Endothelial cell of umbilical vein (primary cell): ENCODE measurements at regions of chr4 and their contacts with region 1.

Region 1: DNA sequence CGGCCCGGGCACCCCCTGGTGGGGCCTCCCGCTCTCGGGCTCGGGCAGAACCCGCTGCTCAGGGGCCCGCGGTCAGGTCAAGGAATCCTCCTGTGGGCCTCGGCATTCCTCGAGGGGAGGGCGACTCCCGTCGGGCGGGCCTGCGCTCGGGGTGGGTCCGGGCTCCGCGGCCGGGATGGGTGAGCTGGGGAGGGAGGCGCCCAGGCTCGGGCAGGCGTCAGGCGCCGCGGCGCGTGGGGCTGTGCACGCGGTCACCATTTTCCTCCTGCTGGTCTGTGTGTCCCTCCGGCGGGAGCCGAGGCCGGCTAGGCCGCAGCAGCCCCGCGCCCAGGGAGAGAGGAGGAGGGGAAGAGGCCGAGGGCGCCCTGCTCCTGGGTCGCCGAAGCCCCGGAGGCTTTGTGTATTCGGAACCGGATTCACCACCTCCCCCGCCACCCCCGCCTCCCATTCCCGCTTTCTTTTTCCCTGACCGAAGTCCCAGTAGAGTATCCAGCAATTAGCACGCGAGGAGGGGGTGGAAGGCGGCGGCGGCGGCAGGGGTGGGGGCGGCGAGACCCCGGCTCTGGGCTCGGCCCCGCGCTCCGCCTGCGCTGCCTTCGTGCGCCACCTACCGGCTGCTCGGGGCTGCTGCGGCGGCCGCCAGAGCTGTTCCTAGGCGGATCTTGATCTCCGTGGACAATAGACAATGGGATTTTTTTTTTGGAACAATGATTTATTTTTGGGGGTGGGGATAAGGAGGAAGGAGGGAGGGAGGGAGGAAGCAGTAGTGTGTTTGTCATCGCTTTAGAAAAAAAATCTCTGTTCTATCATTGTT is 99.0 kb upstream of the MAML3 start:
- DNase-seq: peak; percentile 93
- H3K4me3 ChIP-seq: peak overlapping the region in 1 of 3 experiments; percentile 37
- H3K27ac ChIP-seq: peak overlapping the region; percentile 78
- H3K4me1 ChIP-seq: peaks cover 60% of the 10 kb centered on the region
- H3K27me3 ChIP-seq: no peaks in the 10 kb centered on the region
- CTCF ChIP-seq: peak; percentile 83 to 91
- POLR2A ChIP-seq: no peak

Region 2: DNA sequence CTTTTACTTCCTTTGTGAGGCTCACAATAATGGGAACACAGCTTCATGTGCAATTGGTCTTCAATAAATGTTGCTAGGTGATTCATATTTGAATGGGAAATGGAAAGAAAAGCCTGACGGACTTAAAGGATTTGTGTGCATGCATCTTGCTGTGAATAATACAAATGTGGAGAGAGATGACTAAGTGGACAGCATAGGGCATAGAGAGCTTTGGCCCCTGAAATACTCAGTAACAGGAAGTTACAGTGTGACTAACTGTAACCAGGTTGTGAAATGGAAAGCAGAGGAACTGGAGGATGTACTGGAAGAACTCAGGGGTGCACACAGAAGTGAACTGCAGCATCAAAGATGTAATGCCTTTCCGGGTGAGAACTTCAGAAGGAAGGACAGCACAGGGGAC is 380.7 kb before region 1 on chr4:
- CTCF ChIA-PET with region 1: no interaction called
- POLR2A ChIA-PET with region 1: no interaction called
- dilution Hi-C with region 1: no loop called
- intact Hi-C with region 1: loop called (anchors 5 kb)
- DNase-seq: peak; percentile 93
- H3K4me3 ChIP-seq: no peak overlapping the region
- H3K27ac ChIP-seq: peak overlapping the region; percentile 56
- H3K4me1 ChIP-seq: peaks cover 16% of the 10 kb centered on the region
- H3K27me3 ChIP-seq: no peaks in the 10 kb centered on the region
- CTCF ChIP-seq: no peak
- POLR2A ChIP-seq: no peak

Region 3: DNA sequence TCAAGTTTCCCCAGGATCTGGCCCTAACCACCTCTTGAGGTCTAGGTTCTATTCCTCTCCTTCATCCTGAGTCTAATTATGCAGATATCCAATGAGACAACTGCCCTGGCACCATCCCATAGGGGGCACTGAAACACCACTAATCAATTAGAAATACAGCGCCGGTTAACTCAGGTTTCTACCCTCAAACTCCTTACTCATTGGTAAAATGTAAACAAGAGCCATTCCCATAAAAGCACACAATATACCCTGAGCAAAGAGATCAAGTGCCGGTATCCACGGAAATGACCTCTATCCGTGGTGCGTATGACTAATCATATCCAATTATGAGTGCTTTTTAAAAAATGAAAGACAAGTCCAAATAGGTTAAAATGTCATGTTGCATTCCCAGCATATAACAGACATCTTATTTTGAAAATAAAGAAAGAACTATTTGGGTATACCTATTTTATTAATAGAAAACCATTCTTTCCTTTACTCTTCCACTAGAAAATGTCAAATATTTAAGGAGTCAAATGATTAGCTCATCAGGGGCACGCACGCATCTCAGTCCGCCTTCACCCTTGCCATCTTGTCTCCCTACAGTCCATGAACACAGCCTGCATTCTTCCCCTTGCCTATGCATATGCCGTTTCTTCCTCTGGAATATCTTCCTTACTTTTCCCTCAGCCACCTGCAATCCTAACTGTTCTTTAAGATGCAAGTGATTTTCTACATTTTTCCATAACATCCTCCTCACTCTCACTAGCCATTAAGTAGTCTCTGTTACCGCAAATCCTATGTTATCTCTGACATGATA is 240.1 kb before region 1 on chr4:
- CTCF ChIA-PET with region 1: interaction called, 46 read pairs
- POLR2A ChIA-PET with region 1: interaction called, 5 read pairs
- dilution Hi-C with region 1: no loop called
- intact Hi-C with region 1: loop called (anchors 1 kb)
- DNase-seq: peak; percentile 92
- H3K4me3 ChIP-seq: no peak overlapping the region
- H3K27ac ChIP-seq: peak overlapping the region; percentile 49
- H3K4me1 ChIP-seq: peaks cover 17% of the 10 kb centered on the region
- H3K27me3 ChIP-seq: no peaks in the 10 kb centered on the region
- CTCF ChIP-seq: peak; percentile 62 to 74
- POLR2A ChIP-seq: no peak

Region 4: GRCh38 chr4:140163029-140163810 is 89.7 kb before region 1 on chr4:
- CTCF ChIA-PET with region 1: interaction called, 24 read pairs
- POLR2A ChIA-PET with region 1: interaction called, 5 read pairs
- dilution Hi-C with region 1: no loop called
- intact Hi-C with region 1: no loop called
- DNase-seq: peak; percentile 91
- H3K4me3 ChIP-seq: peak overlapping the region in 1 of 3 experiments; percentile 20
- H3K27ac ChIP-seq: peak overlapping the region; percentile 66
- H3K4me1 ChIP-seq: peaks cover 13% of the 10 kb centered on the region
- H3K27me3 ChIP-seq: no peaks in the 10 kb centered on the region
- CTCF ChIP-seq: no peak
- POLR2A ChIP-seq: peak; percentile 22

Region 5: DNA sequence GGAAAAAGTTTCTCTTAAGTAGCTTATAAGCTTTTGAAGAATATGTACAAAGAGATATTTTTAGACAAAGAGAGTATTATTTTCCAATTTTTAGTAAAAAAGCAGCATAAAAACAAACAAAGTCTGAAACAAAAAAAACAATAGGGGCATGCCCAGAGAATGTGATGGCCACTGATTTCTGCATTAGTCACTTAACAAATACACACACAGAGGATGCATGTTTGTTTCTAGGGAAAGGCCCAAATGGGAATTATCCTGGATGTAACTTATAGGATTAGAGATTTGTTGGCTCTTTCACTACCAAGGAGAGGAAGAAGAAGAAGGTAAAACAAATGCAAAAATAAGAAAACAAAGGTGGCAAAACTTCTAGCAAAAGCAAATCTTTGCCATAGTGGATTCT is 24.6 kb after region 1 on chr4:
- CTCF ChIA-PET with region 1: interaction called, 8 read pairs
- POLR2A ChIA-PET with region 1: no interaction called
- dilution Hi-C with region 1: no loop called
- intact Hi-C with region 1: loop called (anchors 2 kb)
- DNase-seq: peak; percentile 77
- H3K4me3 ChIP-seq: no peak overlapping the region
- H3K27ac ChIP-seq: peak overlapping the region; percentile 75
- H3K4me1 ChIP-seq: peaks cover 13% of the 10 kb centered on the region
- H3K27me3 ChIP-seq: peaks cover 0 to 1% of the 10 kb centered on the region in 2 experiments
- CTCF ChIP-seq: no peak
- POLR2A ChIP-seq: no peak

Region 6: DNA sequence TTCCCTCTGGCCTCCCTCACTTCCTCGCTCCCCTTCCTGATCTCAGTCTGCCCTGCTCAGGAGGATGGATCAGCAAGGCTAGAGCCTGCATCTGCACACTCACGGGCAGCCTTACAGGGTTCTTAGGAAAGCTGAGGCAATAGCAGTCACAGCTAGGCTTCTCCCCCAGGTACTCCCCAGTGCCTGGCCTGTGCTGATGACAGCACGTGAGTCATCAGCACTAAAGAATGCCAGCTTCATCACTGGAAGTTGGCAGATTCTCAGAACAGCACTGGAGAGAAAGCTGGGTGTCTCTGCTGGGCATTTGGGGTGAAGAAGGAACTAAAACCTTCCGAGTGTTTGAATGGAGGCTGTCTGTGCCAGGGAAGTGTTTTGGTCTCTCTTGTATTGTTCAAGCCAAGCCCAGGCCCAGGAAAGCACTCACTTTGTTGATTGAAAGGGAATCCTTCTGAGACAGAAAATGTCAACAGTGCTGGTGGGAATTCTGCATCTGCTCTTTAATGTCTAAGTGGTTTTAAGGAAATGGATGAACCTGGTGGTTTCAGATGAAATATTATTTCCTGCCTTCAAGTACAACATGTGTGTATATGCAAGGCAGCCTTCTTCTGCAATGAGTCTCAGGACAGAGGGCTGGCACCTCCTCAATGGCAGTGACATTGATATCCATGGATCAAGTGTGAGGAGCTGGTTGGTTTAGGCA is 47.5 kb after region 1 on chr4:
- CTCF ChIA-PET with region 1: no interaction called
- POLR2A ChIA-PET with region 1: no interaction called
- dilution Hi-C with region 1: no loop called
- intact Hi-C with region 1: no loop called
- DNase-seq: peak; percentile 29
- H3K4me3 ChIP-seq: no peak overlapping the region
- H3K27ac ChIP-seq: no peak overlapping the region
- H3K4me1 ChIP-seq: peaks cover 10% of the 10 kb centered on the region
- H3K27me3 ChIP-seq: peaks cover 10 to 19% of the 10 kb centered on the region in 2 experiments
- CTCF ChIP-seq: no peak
- POLR2A ChIP-seq: no peak